Thyroid gland (tissue), 4 donors: ENCODE measurements at regions of chr5 and their contacts with region 1.

Region 1: DNA sequence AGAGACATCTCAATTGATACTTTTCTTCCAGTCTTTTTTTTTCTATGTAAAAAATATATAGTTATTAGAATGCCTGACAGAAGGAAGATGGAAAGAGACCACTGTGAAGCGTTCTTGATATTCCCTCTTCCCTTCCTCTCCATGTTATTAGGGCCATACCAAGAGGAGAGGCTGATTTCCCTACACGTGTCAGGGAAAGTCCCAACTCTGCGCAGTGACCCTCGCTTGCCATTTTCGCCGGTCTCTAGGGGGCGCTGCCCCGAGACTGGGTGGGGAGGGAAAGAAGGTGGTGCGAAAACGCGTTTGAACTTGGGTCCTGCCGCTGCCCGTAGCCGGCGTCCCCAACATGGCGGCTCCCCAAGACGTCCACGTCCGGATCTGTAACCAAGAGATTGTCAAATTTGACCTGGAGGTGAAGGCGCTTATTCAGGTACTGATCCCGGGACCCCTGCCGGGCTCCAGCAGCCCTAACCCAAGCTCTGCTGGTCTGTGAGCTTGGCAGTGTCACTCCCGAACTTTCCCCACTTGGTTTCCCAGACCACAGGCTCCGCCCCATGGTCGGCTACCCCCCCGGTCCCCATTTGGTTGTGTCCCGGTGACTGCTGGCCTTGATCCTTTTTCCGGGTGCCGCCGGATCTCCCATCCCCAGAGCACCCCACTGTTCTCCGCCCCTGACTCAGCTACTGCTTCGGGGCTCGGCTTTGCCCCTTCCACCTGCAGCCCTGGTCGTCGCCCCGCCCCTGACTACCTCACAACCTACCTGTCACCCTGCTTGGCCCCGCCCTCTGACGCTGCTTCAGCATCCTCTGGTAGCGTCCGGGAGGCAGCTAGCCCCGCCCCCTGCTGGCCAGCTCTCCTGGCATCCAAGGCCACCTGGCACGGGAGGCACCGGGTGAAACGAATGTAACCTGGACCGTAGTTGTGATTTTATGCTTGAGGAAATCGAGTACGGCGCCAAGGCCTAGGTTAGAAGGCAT is at the start of gene BNIP1:
- DNase-seq: peak; percentile 100
- H3K4me3 ChIP-seq: peak within 1 kb of the TSS; percentile 34 to 83 (median 74)
- H3K27ac ChIP-seq: peak within 1 kb of the TSS; percentile 78 to 95 (median 91)
- H3K4me1 ChIP-seq: no peaks in the 10 kb centered on the region
- H3K27me3 ChIP-seq: no peaks in the 10 kb centered on the region
- CTCF ChIP-seq: peak; percentile 76 to 95 (median 86)
- POLR2A ChIP-seq: peak in 1 of 2 donors; percentile 75
- total RNA-seq, gene BNIP1: 12.0 to 15.9 (median 15.6) TPM

Region 2: GRCh38 chr5:173016621-173017047 is 127.9 kb before region 1 on chr5:
- intact Hi-C with region 1: loop called (anchors 10 kb)
- DNase-seq: peak; percentile 58 to 60
- H3K4me3 ChIP-seq: no peak overlapping the region
- H3K27ac ChIP-seq: peak overlapping the region; percentile 88 to 99 (median 90)
- H3K4me1 ChIP-seq: peaks cover 67 to 73% of the 10 kb centered on the region in 2 donors
- H3K27me3 ChIP-seq: no peaks in the 10 kb centered on the region
- CTCF ChIP-seq: no peak
- POLR2A ChIP-seq: peak in 1 of 2 donors; percentile 65